Transverse colon (tissue), 4 donors: ENCODE measurements at regions of chr9 and their contacts with region 1.

Region 1: GRCh38 chr9:115013998-115014397 is 83.6 kb upstream of the TNFSF8 start:
- DNase-seq: peak; percentile 76
- H3K4me3 ChIP-seq: no peak overlapping the region
- H3K27ac ChIP-seq: no peak overlapping the region
- H3K4me1 ChIP-seq: peaks cover 0 to 6% (median 0%) of the 10 kb centered on the region in 4 donors
- H3K27me3 ChIP-seq: no peaks in the 10 kb centered on the region
- CTCF ChIP-seq: peak; percentile 71 to 87 (median 79)
- EP300 ChIP-seq: no peak
- POLR2A ChIP-seq: no peak

Region 2: DNA sequence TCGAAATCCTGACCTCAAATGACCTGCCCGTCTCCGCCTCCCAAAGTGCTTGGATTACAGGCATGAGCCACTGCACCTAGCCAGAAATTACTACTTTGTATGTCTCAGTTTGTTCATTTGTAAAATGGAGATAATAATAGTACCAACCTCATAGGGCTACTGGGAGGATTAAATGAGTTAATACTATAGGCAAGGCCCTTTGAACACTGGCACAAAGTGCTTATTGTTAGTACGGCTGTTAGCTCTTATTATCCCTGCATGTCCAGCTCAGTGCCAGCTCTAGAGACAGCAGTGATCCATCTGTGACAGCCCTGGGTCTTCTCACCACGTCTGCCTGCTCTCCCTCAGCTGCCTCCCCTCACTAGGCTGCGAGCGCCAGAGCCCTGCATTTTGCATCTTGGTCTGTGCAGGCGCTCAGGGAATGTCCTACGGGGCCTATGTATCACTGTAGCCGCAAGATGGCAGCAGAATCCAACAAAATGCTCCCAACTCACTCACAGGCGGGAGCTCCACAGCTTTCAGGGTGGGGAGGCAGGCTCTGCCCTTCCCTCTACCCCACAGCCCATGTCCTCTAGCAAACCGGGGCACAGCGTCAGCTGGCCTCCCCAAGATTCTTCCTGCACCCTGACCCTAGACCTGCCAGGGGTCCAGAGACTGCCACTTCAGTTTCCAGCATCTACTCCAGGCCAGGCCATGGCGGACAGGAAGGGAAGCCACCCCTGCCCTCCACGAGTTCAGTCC is 608.5 kb before region 1 on chr9:
- in situ Hi-C with region 1: loop called in 1 of 4 experiments (anchors 10 kb)
- intact Hi-C with region 1: no loop called
- DNase-seq: peak; percentile 85
- H3K4me3 ChIP-seq: no peak overlapping the region
- H3K27ac ChIP-seq: no peak overlapping the region
- H3K4me1 ChIP-seq: peaks cover 0 to 12% (median 5%) of the 10 kb centered on the region in 4 donors
- H3K27me3 ChIP-seq: no peaks in the 10 kb centered on the region
- CTCF ChIP-seq: peak; percentile 76 to 87 (median 83)
- EP300 ChIP-seq: no peak
- POLR2A ChIP-seq: no peak

Region 3: GRCh38 chr9:114681594-114682332 is 332.2 kb before region 1 on chr9 and contains the start of gene TEX48:
- in situ Hi-C with region 1: loop called (anchors 5 kb)
- intact Hi-C with region 1: loop called (anchors 5 kb)
- DNase-seq: peak; percentile 83
- H3K4me3 ChIP-seq: no peak within 1 kb of the TSS
- H3K27ac ChIP-seq: no peak within 1 kb of the TSS
- H3K4me1 ChIP-seq: peaks cover 0 to 8% (median 0%) of the 10 kb centered on the region in 4 donors
- H3K27me3 ChIP-seq: no peaks in the 10 kb centered on the region
- CTCF ChIP-seq: peak; percentile 48 to 77 (median 71)
- EP300 ChIP-seq: no peak
- POLR2A ChIP-seq: no peak
- total RNA-seq, gene TEX48: not detected

Region 4: GRCh38 chr9:114738581-114739316 is 275.2 kb before region 1 on chr9:
- in situ Hi-C with region 1: loop called in 3 of 4 experiments (anchors 5 kb)
- intact Hi-C with region 1: loop called (anchors 2 kb)
- DNase-seq: peak; percentile 74
- H3K4me3 ChIP-seq: no peak overlapping the region
- H3K27ac ChIP-seq: no peak overlapping the region
- H3K4me1 ChIP-seq: peaks cover 0 to 9% (median 0%) of the 10 kb centered on the region in 4 donors
- H3K27me3 ChIP-seq: no peaks in the 10 kb centered on the region
- CTCF ChIP-seq: peak; percentile 79 to 93 (median 88)
- EP300 ChIP-seq: no peak
- POLR2A ChIP-seq: no peak

Region 5: GRCh38 chr9:115524453-115525059 is 510.6 kb after region 1 on chr9:
- in situ Hi-C with region 1: no loop called
- intact Hi-C with region 1: loop called (anchors 10 kb)
- DNase-seq: peak; percentile 10
- H3K4me3 ChIP-seq: no peak overlapping the region
- H3K27ac ChIP-seq: peak overlapping the region in 3 of 4 donors; percentile 52 to 76 (median 61)
- H3K4me1 ChIP-seq: peaks cover 0 to 8% (median 3%) of the 10 kb centered on the region in 4 donors
- H3K27me3 ChIP-seq: no peaks in the 10 kb centered on the region
- CTCF ChIP-seq: peak; percentile 66 to 88 (median 72)
- EP300 ChIP-seq: no peak
- POLR2A ChIP-seq: no peak